ENCODE measurements at regions of chr4 and their contacts with region 1.

Region 1: GRCh38 chr4:183471946-183472708 is 27.7 kb downstream of the CDKN2AIP start:
- DNase-seq: peak; percentile 50
- ATAC-seq: peak; percentile 89
- H3K4me3 ChIP-seq: no peak overlapping the region
- H3K27ac ChIP-seq: no peak overlapping the region
- H3K4me1 ChIP-seq: peaks cover 24% of the 10 kb centered on the region
- H3K27me3 ChIP-seq: no peaks in the 10 kb centered on the region
- CTCF ChIP-seq: peak; percentile 84
- EP300 ChIP-seq: no peak
- POLR2A ChIP-seq: no peak
- RAD21 ChIP-seq: peak; percentile 75

Region 2: DNA sequence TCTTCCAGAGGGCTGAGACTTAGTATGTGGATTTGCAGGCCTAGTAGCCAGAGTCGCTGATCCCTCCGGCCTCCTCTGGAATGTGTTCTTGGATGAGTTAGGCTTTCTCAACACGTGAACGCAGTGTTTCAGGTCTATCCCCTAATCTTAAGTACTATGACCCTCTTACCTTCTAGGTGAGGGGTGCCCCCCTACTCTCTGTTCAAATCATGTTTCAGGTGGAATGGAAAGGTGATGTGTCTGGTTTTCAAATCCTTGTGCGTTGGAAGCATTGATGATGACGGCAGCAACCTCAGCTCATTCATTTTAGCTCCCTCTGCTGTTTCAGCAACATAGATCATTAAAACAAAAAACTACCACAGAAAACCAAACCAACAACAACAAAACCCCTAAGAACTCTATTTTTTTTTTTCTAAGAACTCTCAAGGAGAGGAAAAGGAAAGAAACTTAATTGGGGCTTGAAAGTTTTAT is 130.5 kb after region 1 on chr4:
- CTCF ChIA-PET with region 1: interaction called, 10 read pairs
- POLR2A ChIA-PET with region 1: no interaction called
- in situ Hi-C with region 1: loop called (anchors 5 kb)
- intact Hi-C with region 1: loop called (anchors 1 kb)
- DNase-seq: no peak
- ATAC-seq: no peak
- H3K4me3 ChIP-seq: no peak overlapping the region
- H3K27ac ChIP-seq: no peak overlapping the region
- H3K4me1 ChIP-seq: peaks cover 13% of the 10 kb centered on the region
- H3K27me3 ChIP-seq: peaks cover 0 to 1% of the 10 kb centered on the region in 2 experiments; a peak in 1 of 5 replicates
- CTCF ChIP-seq: peak; percentile 45
- EP300 ChIP-seq: no peak
- POLR2A ChIP-seq: no peak
- RAD21 ChIP-seq: no peak

Region 3: GRCh38 chr4:183659029-183659871 is 187.1 kb after region 1 on chr4 and contains the starts of genes RWDD4 and TRAPPC11:
- CTCF ChIA-PET with region 1: no interaction called
- POLR2A ChIA-PET with region 1: interaction called, 4 read pairs
- in situ Hi-C with region 1: no loop called
- intact Hi-C with region 1: loop called (anchors 2 kb)
- DNase-seq: peak; percentile 94
- ATAC-seq: peak; percentile 99
- H3K4me3 ChIP-seq: peak within 1 kb of the TSS; percentile 77 to 85 (median 82)
- H3K27ac ChIP-seq: peak within 1 kb of the TSS; percentile 70
- H3K4me1 ChIP-seq: peaks cover 35% of the 10 kb centered on the region
- H3K27me3 ChIP-seq: no peaks in the 10 kb centered on the region; a peak in 1 of 5 replicates
- CTCF ChIP-seq: 0 out of 2 replicates have a peak, but pooled peaks have one; percentile 35
- EP300 ChIP-seq: no peak
- POLR2A ChIP-seq: peak; percentile 43 to 72; a peak in 3 of 4 replicates
- RAD21 ChIP-seq: peak; percentile 67
- total RNA-seq, gene RWDD4: 25.4 and 28.9 TPM in 2 replicates
- total RNA-seq, gene TRAPPC11: 18.0 and 22.7 TPM in 2 replicates

Region 4: GRCh38 chr4:183722731-183723560 is 250.8 kb after region 1 on chr4:
- CTCF ChIA-PET with region 1: no interaction called
- POLR2A ChIA-PET with region 1: interaction called, 3 read pairs
- in situ Hi-C with region 1: no loop called
- intact Hi-C with region 1: loop called (anchors 1 kb)
- DNase-seq: no peak
- ATAC-seq: peak; percentile 43
- H3K4me3 ChIP-seq: peak overlapping the region in 1 of 3 experiments; percentile 58; a peak in 2 of 6 replicates
- H3K27ac ChIP-seq: peak overlapping the region; percentile 70
- H3K4me1 ChIP-seq: peaks cover 56% of the 10 kb centered on the region
- H3K27me3 ChIP-seq: no peaks in the 10 kb centered on the region
- CTCF ChIP-seq: no peak
- EP300 ChIP-seq: no peak
- POLR2A ChIP-seq: no peak
- RAD21 ChIP-seq: no peak

Region 5: GRCh38 chr4:183797445-183798300 is 325.5 kb after region 1 on chr4:
- CTCF ChIA-PET with region 1: no interaction called
- POLR2A ChIA-PET with region 1: no interaction called
- in situ Hi-C with region 1: no loop called
- intact Hi-C with region 1: loop called (anchors 5 kb)
- DNase-seq: no peak
- ATAC-seq: peak; percentile 88
- H3K4me3 ChIP-seq: peak overlapping the region; percentile 27 to 66 (median 34); a peak in 4 of 6 replicates
- H3K27ac ChIP-seq: no peak overlapping the region
- H3K4me1 ChIP-seq: peaks cover 15% of the 10 kb centered on the region
- H3K27me3 ChIP-seq: peaks cover 0 to 55% of the 10 kb centered on the region in 2 experiments; a peak in 3 of 5 replicates
- CTCF ChIP-seq: no peak
- EP300 ChIP-seq: no peak
- POLR2A ChIP-seq: no peak
- RAD21 ChIP-seq: no peak

Region 6: DNA sequence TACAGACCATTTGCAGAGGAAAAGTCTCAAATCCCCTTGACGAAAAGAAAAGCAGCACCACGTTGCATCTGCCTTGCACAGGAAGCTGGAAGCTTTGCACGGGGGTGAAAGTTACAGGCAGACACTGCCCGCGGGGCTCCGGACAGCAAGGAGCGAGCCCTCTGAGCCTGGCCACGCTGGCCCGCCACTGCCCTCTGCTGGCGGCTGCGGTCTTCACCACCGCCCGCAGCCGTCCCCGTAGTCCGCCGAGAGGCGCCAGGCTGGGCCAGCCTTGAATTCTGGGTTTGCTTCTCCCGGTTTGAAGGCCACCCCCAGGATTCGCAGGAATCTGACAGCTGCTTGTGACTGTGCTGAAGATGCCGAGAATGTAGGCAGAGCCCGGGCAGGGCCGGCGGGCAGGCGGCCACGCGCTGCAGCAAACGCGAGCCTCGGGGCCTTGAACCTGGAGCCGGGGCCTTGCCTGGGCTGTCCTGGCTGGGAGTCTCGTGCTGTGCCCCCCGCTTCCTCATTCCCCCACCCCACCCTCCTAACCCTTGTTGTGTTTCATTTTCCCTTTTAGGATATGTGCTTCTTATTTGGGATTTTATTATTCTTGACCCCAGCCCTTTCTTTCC is 696.4 kb after region 1 on chr4:
- CTCF ChIA-PET with region 1: no interaction called
- POLR2A ChIA-PET with region 1: no interaction called
- in situ Hi-C with region 1: no loop called
- intact Hi-C with region 1: loop called (anchors 5 kb)
- DNase-seq: peak; percentile 26
- ATAC-seq: peak; percentile 98
- H3K4me3 ChIP-seq: no peak overlapping the region
- H3K27ac ChIP-seq: no peak overlapping the region
- H3K4me1 ChIP-seq: no peaks in the 10 kb centered on the region
- H3K27me3 ChIP-seq: peaks cover 0 to 8% of the 10 kb centered on the region in 2 experiments; a peak in 2 of 5 replicates
- CTCF ChIP-seq: peak; percentile 95
- EP300 ChIP-seq: no peak
- POLR2A ChIP-seq: no peak
- RAD21 ChIP-seq: peak; percentile 96